ENCODE measurements at regions of chr19 and their contacts with region 1.

Region 1: GRCh38 chr19:4815426-4816201 is 15.9 kb downstream of the TICAM1 start:
- DNase-seq: peak; percentile 85
- ATAC-seq: peak; percentile 77
- H3K4me3 ChIP-seq: peak overlapping the region in 4 of 5 experiments; percentile 19 to 57 (median 37)
- H3K4me3 Mint-ChIP-seq: peak overlapping the region; percentile 74
- H3K27ac ChIP-seq: peak overlapping the region; percentile 3 to 12
- H3K27ac Mint-ChIP-seq: peak overlapping the region; percentile 60
- H3K4me1 ChIP-seq: peaks cover 10 to 20% of the 10 kb centered on the region in 2 donors
- H3K4me1 Mint-ChIP-seq: peaks cover 25% of the 10 kb centered on the region
- H3K27me3 ChIP-seq: no peaks in the 10 kb centered on the region
- H3K27me3 Mint-ChIP-seq: no peaks in the 10 kb centered on the region
- CTCF ChIP-seq: no peak

Region 2: GRCh38 chr19:4705413-4706131 is 110.0 kb before region 1 on chr19:
- CTCF ChIA-PET with region 1: no interaction called
- POLR2A ChIA-PET with region 1: no interaction called
- intact Hi-C with region 1: no loop called
- DNase-seq: no peak
- ATAC-seq: no peak
- H3K4me3 ChIP-seq: no peak overlapping the region
- H3K4me3 Mint-ChIP-seq: no peak overlapping the region
- H3K27ac ChIP-seq: no peak overlapping the region
- H3K27ac Mint-ChIP-seq: no peak overlapping the region
- H3K4me1 ChIP-seq: no peaks in the 10 kb centered on the region
- H3K4me1 Mint-ChIP-seq: no peaks in the 10 kb centered on the region
- H3K27me3 ChIP-seq: no peaks in the 10 kb centered on the region
- H3K27me3 Mint-ChIP-seq: no peaks in the 10 kb centered on the region
- CTCF ChIP-seq: no peak

Region 3: DNA sequence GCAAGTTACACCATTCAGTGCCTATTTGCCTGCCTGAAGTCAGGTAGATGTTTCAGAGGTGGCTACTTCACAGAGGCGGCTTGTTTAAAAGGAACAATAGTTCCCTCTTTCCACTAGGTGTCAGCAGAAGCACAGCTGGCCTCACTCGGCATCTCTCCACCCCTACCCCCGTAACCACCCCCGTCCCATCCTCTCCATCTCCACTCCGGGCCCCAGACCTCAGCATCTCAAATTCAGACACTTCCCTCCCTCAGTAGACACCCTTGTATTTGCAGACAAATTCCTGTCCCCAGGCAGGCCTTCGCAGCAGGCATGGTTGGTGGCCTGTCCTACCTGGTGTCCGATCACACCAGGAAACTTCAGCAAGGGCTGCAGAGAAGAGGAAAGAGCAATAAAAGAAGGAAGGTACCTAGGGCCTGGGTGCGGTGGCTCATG is 82.9 kb before region 1 on chr19:
- CTCF ChIA-PET with region 1: interaction called, 13 read pairs
- POLR2A ChIA-PET with region 1: no interaction called
- intact Hi-C with region 1: no loop called
- DNase-seq: peak; percentile 80
- ATAC-seq: peak; percentile 97
- H3K4me3 ChIP-seq: peak overlapping the region in 1 of 5 experiments; percentile 30
- H3K4me3 Mint-ChIP-seq: peak overlapping the region; percentile 54
- H3K27ac ChIP-seq: no peak overlapping the region
- H3K27ac Mint-ChIP-seq: no peak overlapping the region
- H3K4me1 ChIP-seq: peaks cover 3 to 6% of the 10 kb centered on the region in 2 donors
- H3K4me1 Mint-ChIP-seq: peaks cover 5% of the 10 kb centered on the region
- H3K27me3 ChIP-seq: peaks cover 0 to 5% (median 1%) of the 10 kb centered on the region in 4 experiments
- H3K27me3 Mint-ChIP-seq: peaks cover 7% of the 10 kb centered on the region
- CTCF ChIP-seq: peak; percentile 78

Region 4: GRCh38 chr19:4803736-4804695 is 11.6 kb before region 1 on chr19:
- CTCF ChIA-PET with region 1: interaction called, 33 read pairs
- POLR2A ChIA-PET with region 1: no interaction called
- intact Hi-C with region 1: no loop called
- DNase-seq: peak; percentile 80
- ATAC-seq: peak; percentile 94
- H3K4me3 ChIP-seq: no peak overlapping the region
- H3K4me3 Mint-ChIP-seq: no peak overlapping the region
- H3K27ac ChIP-seq: no peak overlapping the region
- H3K27ac Mint-ChIP-seq: no peak overlapping the region
- H3K4me1 ChIP-seq: peaks cover 4 to 11% of the 10 kb centered on the region in 2 donors
- H3K4me1 Mint-ChIP-seq: peaks cover 15% of the 10 kb centered on the region
- H3K27me3 ChIP-seq: no peaks in the 10 kb centered on the region
- H3K27me3 Mint-ChIP-seq: no peaks in the 10 kb centered on the region
- CTCF ChIP-seq: peak; percentile 82

Region 5: DNA sequence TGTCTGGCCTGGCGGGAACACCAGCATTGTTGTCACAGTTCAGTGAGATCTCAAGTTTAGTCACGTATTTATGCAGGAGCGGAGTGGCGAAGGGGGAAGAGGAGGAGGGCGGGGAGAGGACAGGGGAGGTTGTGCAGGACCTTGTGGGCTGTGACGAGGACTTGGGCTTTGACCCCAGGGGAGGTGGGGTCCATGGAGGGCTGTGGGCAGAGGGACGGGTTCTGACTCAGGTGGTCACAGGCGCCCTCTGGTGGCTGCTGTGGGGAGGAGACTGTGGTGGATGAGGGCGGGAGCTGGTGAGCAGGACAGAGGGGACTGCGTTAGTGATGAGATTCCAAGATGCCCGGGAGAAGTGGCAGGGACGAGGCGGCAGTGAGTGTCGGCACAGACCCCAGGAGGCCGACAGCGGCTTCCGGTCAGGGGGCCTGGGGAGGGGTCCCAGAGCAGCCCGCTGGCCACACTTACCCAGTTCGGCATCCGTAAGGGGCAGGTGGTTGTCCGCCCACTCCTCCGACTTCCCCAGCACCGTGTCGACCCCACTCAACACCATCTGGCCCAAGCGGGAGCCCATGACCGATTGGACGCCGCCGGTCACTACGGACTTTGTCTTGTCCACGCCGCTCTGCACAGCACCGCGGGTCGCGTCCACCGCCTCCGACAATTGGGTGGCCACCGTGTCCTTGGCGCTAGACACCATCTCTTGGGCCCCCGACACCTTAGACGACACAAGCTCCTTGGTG is 36.1 kb after region 1 on chr19:
- CTCF ChIA-PET with region 1: interaction called, 612 read pairs
- POLR2A ChIA-PET with region 1: no interaction called
- intact Hi-C with region 1: no loop called
- DNase-seq: peak; percentile 82
- ATAC-seq: peak; percentile 89
- H3K4me3 ChIP-seq: no peak overlapping the region
- H3K4me3 Mint-ChIP-seq: peak overlapping the region; percentile 35
- H3K27ac ChIP-seq: no peak overlapping the region
- H3K27ac Mint-ChIP-seq: no peak overlapping the region
- H3K4me1 ChIP-seq: peaks cover 0 to 13% of the 10 kb centered on the region in 2 donors
- H3K4me1 Mint-ChIP-seq: peaks cover 9% of the 10 kb centered on the region
- H3K27me3 ChIP-seq: no peaks in the 10 kb centered on the region
- H3K27me3 Mint-ChIP-seq: no peaks in the 10 kb centered on the region
- CTCF ChIP-seq: peak; percentile 85

Region 6: GRCh38 chr19:4873930-4874329 is 58.3 kb after region 1 on chr19:
- CTCF ChIA-PET with region 1: interaction called, 18 read pairs
- POLR2A ChIA-PET with region 1: no interaction called
- intact Hi-C with region 1: loop called (anchors 5 kb)
- DNase-seq: no peak
- ATAC-seq: no peak
- H3K4me3 ChIP-seq: no peak overlapping the region
- H3K4me3 Mint-ChIP-seq: no peak overlapping the region
- H3K27ac ChIP-seq: no peak overlapping the region
- H3K27ac Mint-ChIP-seq: no peak overlapping the region
- H3K4me1 ChIP-seq: peaks cover 13 to 23% of the 10 kb centered on the region in 2 donors
- H3K4me1 Mint-ChIP-seq: peaks cover 10% of the 10 kb centered on the region
- H3K27me3 ChIP-seq: peaks cover 0 to 14% (median 1%) of the 10 kb centered on the region in 4 experiments
- H3K27me3 Mint-ChIP-seq: peaks cover 6% of the 10 kb centered on the region
- CTCF ChIP-seq: no peak

Region 7: GRCh38 chr19:4916292-4917082 is 100.9 kb after region 1 on chr19:
- CTCF ChIA-PET with region 1: interaction called, 113 read pairs
- POLR2A ChIA-PET with region 1: no interaction called
- intact Hi-C with region 1: no loop called
- DNase-seq: peak; percentile 73
- ATAC-seq: peak; percentile 66
- H3K4me3 ChIP-seq: peak overlapping the region; percentile 51 to 86 (median 81)
- H3K4me3 Mint-ChIP-seq: peak overlapping the region; percentile 99
- H3K27ac ChIP-seq: peak overlapping the region; percentile 40 to 87
- H3K27ac Mint-ChIP-seq: peak overlapping the region; percentile 97
- H3K4me1 ChIP-seq: peaks cover 35 to 50% of the 10 kb centered on the region in 2 donors
- H3K4me1 Mint-ChIP-seq: peaks cover 47% of the 10 kb centered on the region
- H3K27me3 ChIP-seq: no peaks in the 10 kb centered on the region
- H3K27me3 Mint-ChIP-seq: no peaks in the 10 kb centered on the region
- CTCF ChIP-seq: no peak

Region 8: GRCh38 chr19:5031231-5032100 is 215.9 kb after region 1 on chr19:
- CTCF ChIA-PET with region 1: interaction called, 119 read pairs
- POLR2A ChIA-PET with region 1: no interaction called
- intact Hi-C with region 1: loop called (anchors 1 kb)
- DNase-seq: peak; percentile 83
- ATAC-seq: peak; percentile 89
- H3K4me3 ChIP-seq: no peak overlapping the region
- H3K4me3 Mint-ChIP-seq: no peak overlapping the region
- H3K27ac ChIP-seq: no peak overlapping the region
- H3K27ac Mint-ChIP-seq: peak overlapping the region; percentile 32
- H3K4me1 ChIP-seq: peaks cover 0 to 9% of the 10 kb centered on the region in 2 donors
- H3K4me1 Mint-ChIP-seq: peaks cover 18% of the 10 kb centered on the region
- H3K27me3 ChIP-seq: no peaks in the 10 kb centered on the region
- H3K27me3 Mint-ChIP-seq: no peaks in the 10 kb centered on the region
- CTCF ChIP-seq: peak; percentile 92

Measured in B cell (primary cell).